A549 (cell line): ENCODE measurements at regions of chr1 and their contacts with region 1.

Region 1: DNA sequence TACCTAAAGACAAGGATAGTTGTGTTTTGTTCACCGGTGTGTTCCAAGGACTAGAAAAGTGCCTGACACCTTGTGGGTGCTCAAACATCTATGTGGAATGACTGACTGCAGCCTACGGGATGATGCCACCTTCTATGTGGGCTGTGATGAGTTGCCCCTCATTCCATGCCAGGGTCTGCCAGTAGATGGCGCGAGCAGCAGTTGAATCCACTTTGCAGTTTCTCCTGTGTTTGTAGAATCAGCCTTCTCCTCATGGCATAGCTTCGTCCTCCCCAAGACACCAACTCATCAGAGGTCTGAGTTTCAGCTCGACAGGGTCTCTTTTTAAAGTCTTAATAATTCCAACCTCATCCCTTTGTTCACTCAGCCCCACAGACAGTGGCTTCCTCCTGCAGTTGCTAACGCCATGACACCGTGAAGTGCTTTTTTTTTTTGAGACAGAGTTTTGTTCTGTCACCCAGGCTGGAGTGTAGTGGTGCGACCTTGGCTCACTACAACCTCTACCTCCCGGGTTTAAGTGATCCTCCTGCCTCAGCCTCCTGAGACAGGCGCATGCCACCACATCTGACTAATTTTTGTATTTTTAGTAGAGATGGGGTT is 133.7 kb downstream of the CAPN8 start:
- DNase-seq: peak; percentile 61 to 66
- ATAC-seq: peak; percentile 86 to 96
- H3K4me3 ChIP-seq: no peak overlapping the region
- H3K27ac ChIP-seq: no peak overlapping the region
- H3K4me1 ChIP-seq: no peaks in the 10 kb centered on the region
- CTCF ChIP-seq: peak; percentile 72
- EP300 ChIP-seq: no peak
- POLR2A ChIP-seq: no peak
- RAD21 ChIP-seq: peak; percentile 74 to 78

Region 2: DNA sequence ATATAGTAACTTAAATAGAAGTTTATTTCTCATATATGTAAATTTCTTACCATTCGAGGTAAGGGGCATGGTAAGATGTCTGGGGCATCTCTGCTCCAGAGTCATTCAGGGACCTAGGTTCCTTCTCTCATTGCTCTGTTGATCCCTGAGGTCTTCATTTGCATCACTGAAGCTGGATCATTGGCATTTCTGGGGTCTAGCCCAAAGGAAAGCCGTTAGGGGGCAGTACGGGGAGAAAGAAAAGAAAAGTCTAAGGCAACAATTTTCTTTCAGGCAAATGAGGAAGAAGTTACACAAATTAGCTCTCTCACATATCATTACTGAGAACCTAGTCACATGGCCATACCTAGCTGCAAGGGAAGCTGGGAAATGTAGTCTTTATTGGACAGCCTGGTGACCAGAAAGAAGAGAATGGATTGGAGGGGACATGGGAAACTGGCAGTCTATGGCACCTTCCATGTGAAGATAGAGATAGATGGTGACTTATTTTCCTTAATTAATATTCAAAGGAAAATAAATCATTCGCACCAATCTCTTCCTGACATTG is 157.7 kb before region 1 on chr1:
- CTCF ChIA-PET with region 1: no interaction called
- POLR2A ChIA-PET with region 1: no interaction called
- DNase-seq: no peak
- ATAC-seq: no peak
- H3K4me3 ChIP-seq: no peak overlapping the region
- H3K27ac ChIP-seq: no peak overlapping the region
- H3K4me1 ChIP-seq: no peaks in the 10 kb centered on the region
- CTCF ChIP-seq: no peak
- EP300 ChIP-seq: no peak
- POLR2A ChIP-seq: no peak
- RAD21 ChIP-seq: no peak

Region 3: DNA sequence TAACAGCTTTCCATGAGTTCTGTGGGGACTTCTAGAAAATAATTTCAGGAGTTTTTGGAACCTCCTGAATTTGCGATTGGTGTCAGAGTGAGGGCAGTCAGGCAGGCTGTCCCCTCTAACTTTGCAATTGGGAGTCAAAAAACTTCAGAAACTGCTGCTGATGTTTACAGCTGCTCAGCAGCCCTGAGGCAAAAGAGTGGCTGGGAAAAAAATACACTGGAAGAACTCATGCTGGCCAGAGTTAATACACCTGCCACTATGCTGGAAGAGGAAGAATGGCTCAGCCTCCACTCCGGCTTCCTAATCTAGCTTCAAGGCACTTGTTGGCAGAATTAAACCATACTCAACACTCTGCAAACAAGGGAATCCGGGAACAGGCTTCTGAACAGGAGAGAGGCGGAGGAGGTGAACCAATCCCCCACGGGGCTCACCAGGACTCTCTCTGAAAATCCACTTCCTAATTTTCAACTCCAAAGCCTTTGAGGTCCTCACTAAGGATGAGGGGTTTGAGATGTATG is 18.6 kb before region 1 on chr1:
- CTCF ChIA-PET with region 1: interaction called, 11 read pairs
- POLR2A ChIA-PET with region 1: no interaction called
- DNase-seq: no peak
- ATAC-seq: no peak
- H3K4me3 ChIP-seq: no peak overlapping the region
- H3K27ac ChIP-seq: no peak overlapping the region
- H3K4me1 ChIP-seq: no peaks in the 10 kb centered on the region
- CTCF ChIP-seq: no peak
- EP300 ChIP-seq: no peak
- POLR2A ChIP-seq: no peak
- RAD21 ChIP-seq: no peak